Naive thymus-derived CD4-positive, alpha-beta T cell (primary cell): ENCODE measurements at regions of chr17 and their contacts with region 1.

Region 1: DNA sequence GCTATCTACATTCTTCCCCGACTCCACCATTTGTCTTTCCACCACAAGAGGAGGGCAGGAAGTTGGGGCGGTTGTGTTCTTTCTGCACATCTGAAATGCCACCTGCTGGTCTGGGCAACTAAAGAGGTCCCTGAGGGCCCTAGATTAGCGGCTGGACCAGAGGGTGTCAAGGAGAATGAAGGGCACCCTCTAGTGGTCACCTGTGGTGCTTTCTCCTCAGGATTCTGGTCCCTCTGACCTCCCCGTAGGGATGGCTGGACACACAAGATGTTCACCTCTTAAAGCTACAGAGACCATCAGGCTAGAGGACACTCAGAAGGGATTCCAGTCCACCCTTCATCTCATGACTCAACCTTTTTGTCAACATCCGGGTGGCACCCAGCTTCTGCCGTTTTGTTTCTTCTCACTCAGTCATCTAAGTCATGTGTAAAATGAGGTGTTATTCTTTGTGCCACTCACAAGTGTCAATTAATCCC is 2.9 kb upstream of the SCIMP start:
- DNase-seq: peak in 2 of 9 donors; percentile 8 to 28
- ATAC-seq: peak; percentile 55
- H3K4me3 ChIP-seq: no peak overlapping the region
- H3K4me3 Mint-ChIP-seq: peak overlapping the region in 3 of 10 donors; percentile 8 to 32 (median 28)
- H3K27ac ChIP-seq: no peak overlapping the region
- H3K27ac Mint-ChIP-seq: peak overlapping the region in 6 of 9 donors; percentile 42 to 78 (median 60)
- H3K4me1 ChIP-seq: peaks cover 22 to 40% of the 10 kb centered on the region in 2 donors
- H3K4me1 Mint-ChIP-seq: peaks cover 11 to 44% (median 36%) of the 10 kb centered on the region in 7 donors
- H3K27me3 ChIP-seq: no peaks in the 10 kb centered on the region
- H3K27me3 Mint-ChIP-seq: peaks cover 0 to 2% (median 0%) of the 10 kb centered on the region in 5 donors

Region 2: DNA sequence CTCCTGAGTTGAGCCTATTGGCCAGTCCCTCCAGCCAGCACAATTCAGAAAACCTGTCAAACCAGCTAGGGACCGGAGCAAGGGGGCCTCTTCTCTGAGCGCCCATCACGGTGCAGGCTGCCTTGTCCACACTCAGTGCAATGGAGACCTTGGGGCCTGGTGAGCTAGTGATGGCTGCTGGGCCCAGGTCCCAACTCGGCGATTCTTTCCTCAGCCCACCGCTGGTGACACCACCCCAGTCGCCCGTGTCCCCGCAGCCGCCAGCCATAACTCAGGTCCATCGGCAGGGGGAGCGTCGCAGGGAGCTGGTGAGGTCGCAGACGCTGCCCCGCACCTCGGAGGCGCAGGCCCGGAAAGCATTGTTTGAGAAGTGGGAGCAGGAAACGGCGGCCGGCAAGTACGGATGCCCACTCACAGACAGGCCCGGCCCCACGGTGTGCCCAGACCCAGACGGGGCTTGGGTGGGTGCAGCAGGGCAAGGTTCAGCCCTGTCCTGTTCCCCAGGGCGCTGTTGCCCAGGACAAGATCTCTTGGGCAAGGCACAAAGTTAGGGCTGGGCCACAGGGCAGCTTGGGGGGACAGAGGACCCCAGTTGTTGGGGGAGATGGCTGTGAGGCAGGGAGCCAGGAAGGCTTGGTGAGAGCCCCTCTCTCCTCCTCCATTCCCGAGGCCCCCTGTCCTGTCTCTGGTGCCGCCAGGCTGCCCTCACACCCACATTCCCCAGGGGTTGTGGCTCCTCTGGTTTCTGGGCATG is 642.5 kb before region 1 on chr17:
- CTCF ChIA-PET with region 1: no interaction called
- POLR2A ChIA-PET with region 1: no interaction called
- intact Hi-C with region 1: no loop called
- DNase-seq: peak in 6 of 9 donors; percentile 13 to 38 (median 24)
- ATAC-seq: peak; percentile 68
- H3K4me3 ChIP-seq: no peak overlapping the region
- H3K4me3 Mint-ChIP-seq: peak overlapping the region in 3 of 10 donors; percentile 27 to 33 (median 29)
- H3K27ac ChIP-seq: no peak overlapping the region
- H3K27ac Mint-ChIP-seq: no peak overlapping the region
- H3K4me1 ChIP-seq: no peaks in the 10 kb centered on the region
- H3K4me1 Mint-ChIP-seq: peaks cover 0 to 5% (median 4%) of the 10 kb centered on the region in 7 donors
- H3K27me3 ChIP-seq: no peaks in the 10 kb centered on the region
- H3K27me3 Mint-ChIP-seq: peaks cover 0 to 14% (median 2%) of the 10 kb centered on the region in 5 donors

Region 3: GRCh38 chr17:5055543-5055942 is 182.0 kb before region 1 on chr17:
- CTCF ChIA-PET with region 1: no interaction called
- POLR2A ChIA-PET with region 1: no interaction called
- intact Hi-C with region 1: no loop called
- DNase-seq: no peak
- ATAC-seq: no peak
- H3K4me3 ChIP-seq: no peak overlapping the region
- H3K4me3 Mint-ChIP-seq: no peak overlapping the region
- H3K27ac ChIP-seq: no peak overlapping the region
- H3K27ac Mint-ChIP-seq: peak overlapping the region in 1 of 9 donors; percentile 20
- H3K4me1 ChIP-seq: peaks cover 0 to 4% of the 10 kb centered on the region in 2 donors
- H3K4me1 Mint-ChIP-seq: peaks cover 0 to 1% (median 0%) of the 10 kb centered on the region in 7 donors
- H3K27me3 ChIP-seq: no peaks in the 10 kb centered on the region
- H3K27me3 Mint-ChIP-seq: no peaks in the 10 kb centered on the region

Region 4: DNA sequence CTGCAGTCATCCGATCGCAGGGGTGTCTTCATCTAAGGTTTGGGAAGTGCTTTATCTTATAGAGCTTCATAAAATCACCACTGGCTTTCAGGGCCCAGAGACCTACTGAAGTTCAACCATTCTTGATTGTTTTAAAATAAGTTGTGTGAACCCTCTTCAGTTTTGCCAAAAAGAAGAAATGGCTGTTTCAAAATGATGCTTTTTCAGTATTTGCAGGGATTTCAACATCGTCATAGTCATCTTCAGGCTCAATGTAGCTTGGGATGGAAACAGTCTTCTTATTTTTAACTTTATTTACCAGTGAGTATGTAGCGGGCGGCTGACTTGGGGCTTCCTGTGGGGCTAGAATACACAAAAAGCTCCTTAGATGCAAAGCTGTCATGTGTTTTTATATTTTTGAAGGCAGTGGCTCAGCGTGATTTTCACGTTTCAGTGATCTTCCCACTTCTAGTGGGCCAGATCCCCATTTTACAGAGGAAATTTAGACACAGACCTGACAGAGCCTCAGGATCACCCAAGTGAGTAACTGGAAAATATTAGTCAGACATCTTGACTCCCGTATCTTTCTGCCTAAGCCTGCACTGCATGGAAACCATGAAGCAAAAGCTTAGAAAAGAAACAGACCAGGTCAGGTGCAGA is 26.8 kb before region 1 on chr17:
- CTCF ChIA-PET with region 1: no interaction called
- POLR2A ChIA-PET with region 1: no interaction called
- intact Hi-C with region 1: no loop called
- DNase-seq: no peak
- ATAC-seq: no peak
- H3K4me3 ChIP-seq: no peak overlapping the region
- H3K4me3 Mint-ChIP-seq: peak overlapping the region in 4 of 10 donors; percentile 7 to 63 (median 32)
- H3K27ac ChIP-seq: no peak overlapping the region
- H3K27ac Mint-ChIP-seq: peak overlapping the region in 7 of 9 donors; percentile 18 to 78 (median 50)
- H3K4me1 ChIP-seq: no peaks in the 10 kb centered on the region
- H3K4me1 Mint-ChIP-seq: peaks cover 0 to 13% (median 7%) of the 10 kb centered on the region in 7 donors
- H3K27me3 ChIP-seq: no peaks in the 10 kb centered on the region
- H3K27me3 Mint-ChIP-seq: no peaks in the 10 kb centered on the region

Region 5: DNA sequence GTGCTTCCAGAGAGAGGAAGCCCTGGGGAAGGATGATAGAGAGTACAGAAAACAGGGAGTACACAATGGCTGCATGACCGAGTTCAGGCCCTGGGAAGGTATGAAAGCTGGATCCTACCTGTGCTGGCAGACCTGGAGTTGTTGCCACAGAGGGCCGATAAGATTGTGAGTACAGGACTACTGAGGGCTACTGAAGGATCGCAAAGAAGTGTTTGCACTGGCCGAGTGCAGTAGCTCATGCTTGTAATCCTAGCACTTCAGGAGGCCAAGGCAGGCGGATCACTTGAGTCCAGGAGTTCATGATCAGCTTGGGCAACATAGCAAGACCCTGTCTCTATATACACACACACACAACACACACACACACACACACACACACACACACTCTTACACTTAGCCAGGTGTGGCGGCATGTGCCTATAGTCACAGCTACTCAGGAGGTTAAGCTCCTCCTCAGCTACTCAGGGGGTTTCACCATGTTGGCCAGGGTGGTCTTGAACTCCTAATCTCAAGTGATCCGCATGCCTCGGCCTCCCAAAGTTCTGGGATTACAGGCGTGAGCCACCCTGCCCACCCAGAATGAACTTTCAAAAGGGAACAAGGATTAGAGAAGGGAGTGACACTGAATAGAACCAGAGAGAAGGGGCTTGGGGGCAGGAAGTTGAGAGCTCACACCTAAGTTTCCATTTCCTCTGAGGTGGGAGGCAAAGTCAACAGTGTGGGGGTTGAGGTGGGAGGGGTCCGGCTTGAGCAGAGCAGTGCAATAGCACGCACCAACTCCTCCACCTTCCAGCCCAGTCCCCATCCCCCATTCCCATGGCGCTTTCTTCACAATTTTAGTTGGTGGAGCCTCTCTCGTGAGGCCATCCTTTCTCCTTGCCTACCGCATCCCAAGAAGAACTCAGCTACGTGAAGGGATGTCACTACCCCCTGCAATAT is 10.4 kb before region 1 on chr17:
- CTCF ChIA-PET with region 1: interaction called, 5 read pairs
- POLR2A ChIA-PET with region 1: interaction called, 9 read pairs
- intact Hi-C with region 1: loop called in 1 of 2 experiments (anchors 2 kb)
- DNase-seq: peak in 2 of 9 donors; percentile 22 to 27
- ATAC-seq: peak; percentile 74
- H3K4me3 ChIP-seq: peak overlapping the region; percentile 33
- H3K4me3 Mint-ChIP-seq: peak overlapping the region in 8 of 10 donors; percentile 38 to 64 (median 46)
- H3K27ac ChIP-seq: no peak overlapping the region
- H3K27ac Mint-ChIP-seq: peak overlapping the region in 8 of 9 donors; percentile 74 to 92 (median 79)
- H3K4me1 ChIP-seq: peaks cover 11 to 45% of the 10 kb centered on the region in 2 donors
- H3K4me1 Mint-ChIP-seq: peaks cover 5 to 50% (median 32%) of the 10 kb centered on the region in 7 donors
- H3K27me3 ChIP-seq: no peaks in the 10 kb centered on the region
- H3K27me3 Mint-ChIP-seq: no peaks in the 10 kb centered on the region

Region 6: GRCh38 chr17:5275287-5275686 is 37.7 kb after region 1 on chr17:
- CTCF ChIA-PET with region 1: no interaction called
- POLR2A ChIA-PET with region 1: no interaction called
- intact Hi-C with region 1: no loop called
- DNase-seq: no peak
- ATAC-seq: no peak
- H3K4me3 ChIP-seq: no peak overlapping the region
- H3K4me3 Mint-ChIP-seq: no peak overlapping the region
- H3K27ac ChIP-seq: no peak overlapping the region
- H3K27ac Mint-ChIP-seq: no peak overlapping the region
- H3K4me1 ChIP-seq: no peaks in the 10 kb centered on the region
- H3K4me1 Mint-ChIP-seq: peaks cover 0 to 2% (median 0%) of the 10 kb centered on the region in 7 donors
- H3K27me3 ChIP-seq: no peaks in the 10 kb centered on the region
- H3K27me3 Mint-ChIP-seq: no peaks in the 10 kb centered on the region